GM10248 (cell line): ENCODE measurements at regions of chr1 and their contacts with region 1.

Region 1: DNA sequence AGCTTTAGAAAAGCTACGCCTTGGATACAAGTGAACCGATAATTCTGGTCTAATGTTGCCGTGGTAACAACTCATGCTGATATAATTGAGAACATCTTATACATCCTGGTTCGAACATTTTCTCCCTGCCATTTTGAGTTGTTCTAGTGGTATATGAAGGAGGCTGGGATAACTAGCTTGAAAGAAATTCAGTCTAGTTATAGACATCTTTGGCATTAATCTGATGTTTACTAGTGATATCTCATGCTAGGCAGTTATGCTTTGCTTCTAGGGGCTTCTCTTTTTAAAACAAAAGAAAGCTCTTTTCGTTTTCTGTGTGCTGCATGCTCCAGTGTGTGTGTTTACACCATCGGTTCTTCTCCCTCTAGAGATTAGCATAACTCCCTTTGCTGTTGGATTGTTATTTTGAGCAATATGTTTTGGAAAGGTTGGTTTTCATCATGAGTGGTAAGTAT is 20.5 kb downstream of the PRKACB start:
- DNase-seq: no peak
- CTCF ChIP-seq: no peak

Region 2: GRCh38 chr1:84152649-84153056 is 11.9 kb before region 1 on chr1:
- CTCF ChIA-PET with region 1: interaction called, 12 read pairs
- POLR2A ChIA-PET with region 1: no interaction called
- DNase-seq: no peak
- CTCF ChIP-seq: no peak